GM13976 (cell line): ENCODE measurements at regions of chr6 and their contacts with region 1.

Region 1: DNA sequence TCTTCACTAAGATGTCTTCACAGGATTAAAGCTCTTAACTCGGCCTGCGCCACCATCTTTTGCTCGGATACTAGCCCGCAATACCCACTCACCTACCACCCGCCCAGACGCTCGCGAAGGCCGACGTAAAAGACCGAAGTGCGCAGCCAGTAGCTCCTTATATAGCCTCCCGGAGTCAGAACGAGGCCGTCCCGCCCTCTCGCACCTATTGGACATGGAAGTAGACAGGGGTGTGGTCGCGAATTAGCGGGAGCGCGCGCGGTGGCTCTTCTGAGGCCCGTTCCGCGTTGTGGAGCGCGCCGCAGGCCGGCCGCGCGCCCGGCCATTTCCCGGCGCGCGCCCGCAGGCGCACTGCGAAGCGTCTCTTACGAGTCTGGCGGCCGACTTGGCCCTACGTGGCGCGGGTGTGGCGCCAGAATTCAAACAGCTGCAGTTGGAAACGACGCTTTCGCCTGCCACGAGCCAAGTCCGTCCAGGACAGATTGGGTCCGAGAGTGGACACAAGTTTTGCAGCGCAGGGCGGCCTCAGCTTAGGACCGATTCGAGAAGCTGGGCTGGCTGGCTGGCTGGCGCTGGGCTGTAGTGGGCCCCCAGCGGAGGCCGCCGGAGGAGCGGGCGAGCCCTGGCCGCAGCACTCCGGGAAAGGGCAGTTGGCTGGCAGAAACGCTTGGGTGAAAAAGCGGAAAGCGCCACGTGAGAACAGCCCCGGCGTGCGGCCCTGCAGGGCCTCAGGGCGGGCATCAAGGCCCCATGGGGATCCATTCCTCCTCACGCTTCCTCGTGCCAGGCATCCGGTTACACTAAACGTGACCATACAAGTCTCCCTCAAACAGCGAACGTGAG is 36.1 kb upstream of the SYNCRIP start:
- DNase-seq: peak; percentile 96
- CTCF ChIP-seq: no peak

Region 2: GRCh38 chr6:85642774-85643536 is 35.9 kb before region 1 on chr6 and contains the start of gene SYNCRIP:
- in situ Hi-C with region 1: loop called (anchors 5 kb)
- DNase-seq: peak; percentile 93
- CTCF ChIP-seq: no peak

Region 3: GRCh38 chr6:85826997-85827396 is 148.2 kb after region 1 on chr6:
- in situ Hi-C with region 1: no loop called
- DNase-seq: no peak
- CTCF ChIP-seq: no peak

Region 4: DNA sequence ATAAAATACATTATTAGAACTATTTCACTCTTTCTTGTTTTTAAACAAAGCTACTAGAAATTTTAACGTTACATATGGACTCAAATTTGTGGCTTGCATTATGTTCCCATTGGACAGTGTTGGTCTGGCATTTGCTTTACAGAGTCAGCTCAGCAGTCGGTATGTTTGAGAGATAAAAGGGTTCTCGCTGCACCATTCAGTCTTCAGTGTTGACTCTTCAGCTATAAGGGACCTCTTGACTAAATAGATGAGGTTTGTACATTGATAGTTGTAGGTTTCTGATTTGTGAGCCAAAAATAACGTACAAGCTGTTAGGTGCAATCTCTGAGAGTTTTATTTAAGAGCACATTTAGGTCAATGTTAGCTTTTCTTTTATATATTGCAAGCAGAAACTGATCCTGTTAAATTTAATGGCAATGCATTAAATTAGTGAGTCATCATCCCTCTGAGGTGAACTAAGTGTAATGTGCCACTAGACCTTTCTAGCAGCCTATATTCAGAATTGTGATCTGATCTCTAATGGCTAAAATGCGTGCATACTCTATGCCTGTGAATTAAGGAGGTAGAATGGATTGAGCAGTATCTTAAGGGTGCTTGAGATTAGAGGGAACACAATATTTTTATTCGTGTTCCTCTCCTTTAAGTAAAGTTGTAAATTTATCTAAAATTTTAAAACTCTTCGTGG is 449.4 kb after region 1 on chr6:
- in situ Hi-C with region 1: no loop called
- DNase-seq: no peak
- CTCF ChIP-seq: no peak